ENCODE measurements at regions of chr1 and their contacts with region 1.

Region 1: DNA sequence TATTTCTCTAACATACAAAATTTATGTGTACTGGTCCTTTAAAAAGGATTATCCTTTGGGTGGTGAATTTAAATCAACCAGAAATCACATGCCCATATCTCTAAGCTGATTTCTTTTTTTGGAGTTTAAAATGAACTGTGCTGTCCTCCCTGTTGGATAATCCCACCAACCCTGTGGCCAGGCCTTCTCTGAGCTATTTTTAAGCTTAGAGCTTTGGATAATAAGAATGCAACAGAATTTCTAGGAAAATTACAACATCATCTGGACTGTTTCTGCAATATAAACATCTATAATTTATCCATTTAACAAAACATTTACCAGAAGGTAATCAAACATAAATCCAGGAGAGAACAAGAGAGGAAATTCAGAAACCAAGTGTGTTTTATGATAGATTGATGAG is 88.3 kb downstream of the LRRC40 start:
- DNase-seq: no peak
- H3K4me3 ChIP-seq: no peak overlapping the region
- H3K27ac ChIP-seq: no peak overlapping the region
- H3K27me3 ChIP-seq: no peaks in the 10 kb centered on the region
- CTCF ChIP-seq: no peak

Region 2: DNA sequence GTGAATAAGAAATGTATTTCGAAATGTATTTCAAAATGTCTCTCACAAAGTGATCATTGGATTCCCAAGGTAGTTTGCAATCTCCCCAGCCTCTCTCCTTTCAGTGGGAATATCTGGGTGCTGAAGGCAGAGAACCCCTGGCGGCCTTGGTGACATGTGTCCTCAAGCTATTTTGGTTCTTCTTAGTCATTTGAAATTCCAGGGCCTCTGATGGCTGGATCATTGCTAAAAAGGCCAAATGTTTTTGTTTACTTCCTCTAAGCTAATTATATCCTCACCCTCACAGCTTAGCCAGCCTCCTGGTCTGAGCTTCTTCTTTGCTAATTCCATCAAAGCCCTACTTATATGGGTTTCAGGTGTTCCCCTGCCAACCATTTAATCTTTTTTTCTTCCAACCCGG is 17.1 kb after region 1 on chr1:
- CTCF ChIA-PET with region 1: interaction called, 13 read pairs
- POLR2A ChIA-PET with region 1: no interaction called
- DNase-seq: no peak
- H3K4me3 ChIP-seq: no peak overlapping the region
- H3K27ac ChIP-seq: no peak overlapping the region
- H3K27me3 ChIP-seq: no peaks in the 10 kb centered on the region
- CTCF ChIP-seq: no peak

Region 3: DNA sequence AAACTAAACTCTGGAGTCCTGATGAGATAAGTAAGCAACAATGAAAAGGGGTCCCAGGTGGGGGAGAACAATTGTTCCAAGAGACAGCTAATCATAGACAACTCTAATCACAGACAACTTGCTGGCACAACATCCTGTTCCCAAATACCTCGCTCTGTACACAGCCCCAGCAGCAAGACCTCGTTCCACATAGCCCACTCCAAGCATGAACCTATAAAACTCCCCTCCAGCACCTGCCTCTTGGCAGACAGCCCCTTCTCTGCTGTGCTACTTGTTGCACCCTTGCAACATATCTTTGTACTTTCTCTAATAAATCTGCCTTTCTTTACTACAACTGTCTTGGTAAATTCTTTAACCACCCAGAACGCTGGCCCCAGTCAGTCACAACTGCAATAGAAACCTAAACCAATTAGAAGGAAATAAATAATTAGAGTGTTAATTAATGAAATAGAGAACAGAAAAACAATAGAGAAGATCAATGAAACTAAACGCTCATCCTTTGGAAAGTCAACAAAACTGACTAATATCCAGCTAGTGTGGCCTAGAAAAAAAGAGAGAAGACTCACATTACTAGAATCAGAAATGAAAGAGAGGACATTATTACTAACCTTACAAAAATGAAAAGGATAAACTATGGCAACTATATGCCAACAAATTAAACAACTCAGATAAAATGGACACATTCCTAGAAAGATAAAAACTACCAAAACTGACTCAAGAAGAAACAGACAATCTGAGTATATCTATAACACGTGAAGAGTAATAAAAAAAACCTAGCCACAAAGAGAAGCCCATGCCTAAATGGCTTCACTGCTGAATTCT is 52.2 kb after region 1 on chr1:
- CTCF ChIA-PET with region 1: no interaction called
- POLR2A ChIA-PET with region 1: no interaction called
- DNase-seq: no peak
- H3K4me3 ChIP-seq: no peak overlapping the region
- H3K27ac ChIP-seq: no peak overlapping the region
- H3K27me3 ChIP-seq: no peaks in the 10 kb centered on the region
- CTCF ChIP-seq: no peak

Measured in AG04450 (cell line).